A549 (cell line): ENCODE measurements at regions of chr21 and their contacts with region 1.

Region 1: DNA sequence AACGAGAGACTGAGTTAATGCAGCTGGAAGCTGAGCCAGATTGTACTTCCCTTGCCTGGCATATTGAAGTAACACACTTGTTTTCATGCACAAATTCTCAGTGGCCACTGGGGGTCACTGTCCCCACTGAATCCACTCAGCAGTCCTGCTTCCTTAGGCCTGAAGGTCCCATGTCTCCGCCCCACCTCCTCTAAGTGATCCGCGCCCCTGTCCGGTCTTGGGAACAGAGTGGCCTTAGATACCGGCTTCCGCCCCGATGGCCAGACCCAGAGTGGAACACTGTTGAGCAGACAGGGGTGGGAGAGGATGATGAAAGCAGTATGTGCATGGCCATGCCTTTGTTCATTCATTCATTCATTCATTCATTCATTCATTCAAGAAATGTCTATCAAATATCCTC is 34.8 kb downstream of the CHAF1B start:
- DNase-seq: peak; percentile 84 to 91
- ATAC-seq: peak; percentile 92 to 95
- H3K4me3 ChIP-seq: no peak overlapping the region
- H3K27ac ChIP-seq: peak overlapping the region; percentile 47 to 67; a peak in 4 of 6 replicates
- H3K4me1 ChIP-seq: peaks cover 13% of the 10 kb centered on the region
- CTCF ChIP-seq: peak; percentile 67
- EP300 ChIP-seq: no peak
- POLR2A ChIP-seq: no peak
- RAD21 ChIP-seq: peak; percentile 77 to 82

Region 2: DNA sequence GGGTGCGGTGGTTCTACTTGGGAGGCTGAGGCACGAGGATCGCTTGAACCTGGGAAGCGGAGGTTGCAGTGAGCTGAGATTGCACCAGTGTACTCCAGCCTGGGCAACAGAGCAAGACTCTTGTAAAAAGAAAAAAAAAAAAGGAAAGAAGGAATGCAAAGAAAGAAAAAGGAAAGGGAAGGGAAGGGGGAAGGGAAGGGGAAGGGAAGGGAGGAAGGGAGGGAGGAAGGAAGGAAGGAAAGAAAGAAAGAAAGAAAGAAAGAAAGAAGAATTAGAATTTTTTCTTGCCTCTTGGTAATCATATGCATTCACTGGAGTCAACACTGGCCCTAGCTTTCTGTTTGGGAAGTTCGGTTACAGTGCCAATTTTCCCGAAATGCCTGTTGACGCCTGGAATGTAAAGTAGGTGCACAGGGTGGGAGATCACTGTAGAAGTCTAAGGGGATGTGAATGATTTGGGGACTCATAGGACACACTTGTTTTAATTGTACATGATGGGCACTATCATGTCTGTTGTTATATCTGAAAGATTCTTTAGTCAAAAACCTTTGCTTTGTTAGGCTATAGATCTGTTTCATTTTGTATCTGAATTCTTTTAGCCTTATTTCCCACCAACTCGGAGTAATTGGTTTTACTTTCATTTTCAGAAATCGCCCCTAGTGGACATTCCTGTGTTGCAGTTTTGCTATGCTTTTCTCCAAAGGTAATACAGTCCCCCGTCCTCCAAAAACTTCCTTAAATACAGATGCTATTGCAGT is 159.8 kb before region 1 on chr21:
- CTCF ChIA-PET with region 1: no interaction called
- POLR2A ChIA-PET with region 1: no interaction called
- DNase-seq: peak; percentile 40 to 46
- ATAC-seq: peak; percentile 78 to 89
- H3K4me3 ChIP-seq: peak overlapping the region; percentile 48
- H3K27ac ChIP-seq: peak overlapping the region; percentile 58 to 82; a peak in 5 of 6 replicates
- H3K4me1 ChIP-seq: no peaks in the 10 kb centered on the region
- CTCF ChIP-seq: peak; percentile 48
- EP300 ChIP-seq: no peak
- POLR2A ChIP-seq: no peak
- RAD21 ChIP-seq: peak in 1 of 2 experiments; percentile 15; a peak in 2 of 5 replicates

Region 3: GRCh38 chr21:36330904-36331303 is 89.1 kb before region 1 on chr21:
- CTCF ChIA-PET with region 1: no interaction called
- POLR2A ChIA-PET with region 1: no interaction called
- DNase-seq: peak; percentile 18 to 53
- ATAC-seq: peak; percentile 86 to 89
- H3K4me3 ChIP-seq: no peak overlapping the region
- H3K27ac ChIP-seq: no peak overlapping the region
- H3K4me1 ChIP-seq: peaks cover 7% of the 10 kb centered on the region; the same call in 1 of the 3 replicates
- CTCF ChIP-seq: peak; percentile 46
- EP300 ChIP-seq: no peak
- POLR2A ChIP-seq: no peak
- RAD21 ChIP-seq: peak; percentile 54 to 60

Region 4: GRCh38 chr21:36615274-36615964 is 195.4 kb after region 1 on chr21:
- CTCF ChIA-PET with region 1: no interaction called
- POLR2A ChIA-PET with region 1: no interaction called
- DNase-seq: peak; percentile 6 to 13
- ATAC-seq: peak in 1 of 2 experiments; percentile 74; a peak in 3 of 6 replicates
- H3K4me3 ChIP-seq: no peak overlapping the region
- H3K27ac ChIP-seq: no peak overlapping the region
- H3K4me1 ChIP-seq: no peaks in the 10 kb centered on the region
- CTCF ChIP-seq: no peak
- EP300 ChIP-seq: no peak
- POLR2A ChIP-seq: no peak
- RAD21 ChIP-seq: 0 out of 5 replicates have a peak, but pooled peaks of 1 of the 2 experiments have one; percentile 25

Region 5: DNA sequence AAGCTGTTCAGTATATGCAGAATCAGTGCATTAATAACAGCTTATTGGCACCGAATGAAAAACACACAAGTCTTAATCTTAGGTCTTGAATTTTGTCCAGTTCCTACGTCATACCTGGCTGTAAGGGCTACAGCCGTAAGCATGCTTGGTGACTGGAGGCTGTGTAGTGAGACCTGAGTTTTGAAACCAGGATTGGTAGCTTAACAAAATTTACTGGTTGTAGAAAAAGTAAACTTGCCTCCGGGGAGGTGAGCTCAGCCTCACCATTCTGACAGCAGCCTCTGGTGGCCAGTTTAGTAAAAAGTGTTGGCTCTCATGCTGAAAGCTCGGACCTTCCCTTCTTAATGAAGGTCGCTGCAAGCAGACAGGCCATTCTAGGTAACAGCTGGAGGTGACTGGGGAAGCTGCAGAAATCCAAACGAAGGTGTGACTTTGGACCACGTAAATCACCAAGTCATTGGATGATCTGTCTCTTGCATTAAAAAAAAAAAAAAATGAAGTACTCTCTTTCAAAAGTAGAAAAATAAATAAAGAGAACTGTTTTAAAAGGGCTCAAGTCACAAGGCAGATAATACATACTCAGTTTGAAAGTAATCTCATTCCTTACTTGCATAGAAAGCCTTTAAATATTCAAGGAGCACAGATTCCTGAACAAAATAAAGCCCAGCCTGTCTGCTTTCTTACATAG is 497.6 kb after region 1 on chr21:
- CTCF ChIA-PET with region 1: interaction called, 14 read pairs
- POLR2A ChIA-PET with region 1: no interaction called
- DNase-seq: peak; percentile 43 to 84
- ATAC-seq: peak; percentile 92 to 97
- H3K4me3 ChIP-seq: no peak overlapping the region
- H3K27ac ChIP-seq: peak overlapping the region; percentile 74 to 95
- H3K4me1 ChIP-seq: peaks cover 43% of the 10 kb centered on the region
- CTCF ChIP-seq: peak; percentile 67
- EP300 ChIP-seq: no peak
- POLR2A ChIP-seq: no peak
- RAD21 ChIP-seq: peak; percentile 78 to 79